Activated B cell treated with CpG ODN at 0.5 μM for 24 hours (primary cell): ENCODE measurements at regions of chr15 and their contacts with region 1.

Region 1: GRCh38 chr15:91302588-91303439 is 202.8 kb downstream of the SV2B start:
- DNase-seq: no peak
- ATAC-seq: no peak
- H3K4me3 Mint-ChIP-seq: no peak overlapping the region
- H3K27ac Mint-ChIP-seq: no peak overlapping the region
- H3K4me1 Mint-ChIP-seq: no peaks in the 10 kb centered on the region
- H3K27me3 Mint-ChIP-seq: peaks cover 26% of the 10 kb centered on the region
- CTCF ChIP-seq: peak; percentile 34

Region 2: GRCh38 chr15:91243820-91244219 is 59.0 kb before region 1 on chr15:
- CTCF ChIA-PET with region 1: no interaction called
- POLR2A ChIA-PET with region 1: interaction called, 4 read pairs
- intact Hi-C with region 1: loop called (anchors 10 kb)
- DNase-seq: no peak
- ATAC-seq: no peak
- H3K4me3 Mint-ChIP-seq: no peak overlapping the region
- H3K27ac Mint-ChIP-seq: no peak overlapping the region
- H3K4me1 Mint-ChIP-seq: no peaks in the 10 kb centered on the region
- H3K27me3 Mint-ChIP-seq: peaks cover 8% of the 10 kb centered on the region
- CTCF ChIP-seq: no peak

Region 3: DNA sequence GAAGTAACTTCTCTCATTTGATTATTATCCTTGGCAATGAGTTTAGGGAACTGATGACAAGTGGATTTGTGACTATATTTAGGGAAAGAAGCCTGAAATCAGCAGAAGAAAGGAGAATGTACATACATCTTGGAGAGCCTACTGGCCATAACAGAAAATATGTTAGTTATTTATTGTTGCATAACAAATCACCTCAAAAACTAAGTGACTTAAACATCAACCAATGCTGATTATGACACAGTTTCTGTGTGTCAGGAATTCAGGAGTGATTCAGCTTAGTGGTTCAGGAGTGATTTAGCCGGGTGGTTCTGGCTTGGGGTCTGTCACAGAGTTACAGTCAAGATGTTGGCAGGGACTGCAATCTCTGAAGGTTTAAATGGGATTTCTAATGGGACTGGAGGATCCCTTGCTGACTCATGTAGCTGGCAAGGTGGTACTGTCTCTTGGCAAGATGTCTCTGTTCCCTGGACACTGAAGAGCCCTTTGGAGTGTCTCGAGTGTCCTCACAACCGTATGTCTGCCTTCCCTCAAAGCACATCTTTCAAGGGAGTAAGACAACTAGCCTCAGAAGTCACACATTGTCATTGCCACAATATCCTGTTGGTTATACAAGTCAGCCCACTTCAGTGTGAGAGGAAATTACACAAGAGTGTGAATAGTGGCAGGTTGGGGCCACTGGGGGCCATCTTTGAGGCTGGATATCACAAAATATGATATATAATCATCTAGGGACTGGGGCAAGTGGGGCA is 46.1 kb after region 1 on chr15:
- CTCF ChIA-PET with region 1: no interaction called
- POLR2A ChIA-PET with region 1: no interaction called
- intact Hi-C with region 1: no loop called
- DNase-seq: no peak
- ATAC-seq: no peak
- H3K4me3 Mint-ChIP-seq: no peak overlapping the region
- H3K27ac Mint-ChIP-seq: no peak overlapping the region
- H3K4me1 Mint-ChIP-seq: no peaks in the 10 kb centered on the region
- H3K27me3 Mint-ChIP-seq: no peaks in the 10 kb centered on the region
- CTCF ChIP-seq: no peak

Region 4: DNA sequence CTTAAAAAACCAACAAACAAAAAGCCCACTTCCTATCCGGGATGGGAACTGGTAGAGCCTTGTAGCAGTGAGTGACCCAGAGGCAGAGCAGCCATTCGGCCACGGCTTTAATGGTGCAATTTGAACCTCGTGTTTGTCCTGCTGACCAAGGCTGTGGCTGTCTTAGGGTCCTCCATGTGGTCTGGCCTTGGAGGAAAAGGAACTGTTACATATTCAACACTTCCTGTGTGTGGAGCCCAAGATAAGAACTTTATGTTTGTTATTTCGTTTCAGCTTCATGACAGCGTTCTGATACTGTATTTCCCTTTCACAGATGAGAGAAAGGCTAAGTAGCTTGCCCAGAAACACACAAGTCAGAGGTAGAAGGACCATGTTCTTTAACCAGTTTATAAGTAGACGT is 67.0 kb after region 1 on chr15:
- CTCF ChIA-PET with region 1: no interaction called
- POLR2A ChIA-PET with region 1: no interaction called
- intact Hi-C with region 1: no loop called
- DNase-seq: no peak
- ATAC-seq: no peak
- H3K4me3 Mint-ChIP-seq: no peak overlapping the region
- H3K27ac Mint-ChIP-seq: no peak overlapping the region
- H3K4me1 Mint-ChIP-seq: no peaks in the 10 kb centered on the region
- H3K27me3 Mint-ChIP-seq: no peaks in the 10 kb centered on the region
- CTCF ChIP-seq: no peak

Region 5: DNA sequence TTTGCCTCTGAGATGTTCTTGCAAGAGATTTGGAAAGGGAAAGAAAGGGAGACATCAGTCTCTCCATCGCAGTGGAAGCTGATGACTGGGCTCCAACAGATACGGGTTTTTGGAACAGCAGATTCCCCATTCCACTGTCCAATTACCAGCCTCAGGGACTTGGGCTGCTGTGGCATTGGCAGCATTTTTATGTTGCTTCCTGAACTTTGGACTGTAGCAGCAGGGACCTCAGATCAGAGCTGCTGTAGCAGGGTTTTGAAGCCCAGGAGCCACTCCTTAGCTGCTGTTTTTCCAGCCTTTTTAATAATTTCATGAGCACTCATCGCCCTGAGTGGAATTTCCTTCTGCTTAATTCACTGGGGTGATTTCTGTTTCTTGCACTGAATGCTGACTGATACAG is 415.0 kb after region 1 on chr15:
- CTCF ChIA-PET with region 1: no interaction called
- POLR2A ChIA-PET with region 1: no interaction called
- intact Hi-C with region 1: no loop called
- DNase-seq: no peak
- ATAC-seq: no peak
- H3K4me3 Mint-ChIP-seq: no peak overlapping the region
- H3K27ac Mint-ChIP-seq: no peak overlapping the region
- H3K4me1 Mint-ChIP-seq: no peaks in the 10 kb centered on the region
- H3K27me3 Mint-ChIP-seq: no peaks in the 10 kb centered on the region
- CTCF ChIP-seq: no peak

Region 6: DNA sequence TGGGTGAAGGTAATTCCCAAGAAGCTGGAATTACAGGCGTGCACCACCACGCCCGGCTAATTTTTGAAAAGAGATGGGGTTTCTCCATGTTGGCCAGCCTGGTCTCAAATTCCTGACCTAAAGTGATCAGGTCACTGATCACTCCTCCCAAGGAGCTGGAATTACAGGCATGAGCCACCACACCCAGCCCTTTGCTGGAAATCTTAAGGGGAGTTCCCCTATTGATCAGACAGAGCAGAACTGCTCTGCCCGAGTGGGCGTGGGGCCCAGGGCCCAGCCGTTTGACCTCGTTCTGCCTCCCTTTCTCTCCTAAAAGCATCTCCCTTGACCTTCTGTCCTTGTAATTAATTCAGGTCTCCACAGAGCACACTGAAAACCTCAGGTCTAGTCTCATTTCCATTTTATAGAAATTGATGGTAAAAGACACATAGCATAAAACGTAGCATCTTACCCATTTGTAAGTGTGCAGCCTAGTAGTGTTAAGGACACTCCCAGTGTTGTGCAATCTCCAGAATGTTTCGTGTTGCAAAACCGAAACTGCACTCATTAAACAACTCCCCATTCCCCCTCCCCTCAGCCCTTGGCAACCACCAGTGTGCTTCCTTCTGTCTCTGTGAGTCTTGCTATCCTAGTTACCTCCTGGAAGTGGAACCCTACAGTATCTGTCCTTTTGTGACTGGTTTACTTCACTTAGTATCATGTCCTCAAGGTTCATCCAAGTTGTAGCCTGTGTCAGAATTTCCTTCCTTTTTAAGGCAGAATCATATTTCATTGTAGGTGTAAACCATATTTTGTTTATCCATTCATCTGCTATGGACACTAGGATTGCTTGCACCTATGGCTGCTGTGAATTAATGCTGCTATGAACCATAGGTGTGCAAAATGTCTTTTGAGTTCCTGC is 640.1 kb after region 1 on chr15:
- CTCF ChIA-PET with region 1: no interaction called
- POLR2A ChIA-PET with region 1: no interaction called
- intact Hi-C with region 1: loop called (anchors 5 kb)
- DNase-seq: no peak
- ATAC-seq: no peak
- H3K4me3 Mint-ChIP-seq: no peak overlapping the region
- H3K27ac Mint-ChIP-seq: no peak overlapping the region
- H3K4me1 Mint-ChIP-seq: no peaks in the 10 kb centered on the region
- H3K27me3 Mint-ChIP-seq: peaks cover 2% of the 10 kb centered on the region
- CTCF ChIP-seq: no peak

Region 7: GRCh38 chr15:92077353-92078085 is 774.7 kb after region 1 on chr15:
- CTCF ChIA-PET with region 1: interaction called, 5 read pairs
- POLR2A ChIA-PET with region 1: no interaction called
- intact Hi-C with region 1: loop called (anchors 1 kb)
- DNase-seq: no peak
- ATAC-seq: no peak
- H3K4me3 Mint-ChIP-seq: no peak overlapping the region
- H3K27ac Mint-ChIP-seq: no peak overlapping the region
- H3K4me1 Mint-ChIP-seq: no peaks in the 10 kb centered on the region
- H3K27me3 Mint-ChIP-seq: no peaks in the 10 kb centered on the region
- CTCF ChIP-seq: no peak